Transverse colon (tissue), 4 donors: ENCODE measurements at regions of chr6 and their contacts with region 1.

Region 1: DNA sequence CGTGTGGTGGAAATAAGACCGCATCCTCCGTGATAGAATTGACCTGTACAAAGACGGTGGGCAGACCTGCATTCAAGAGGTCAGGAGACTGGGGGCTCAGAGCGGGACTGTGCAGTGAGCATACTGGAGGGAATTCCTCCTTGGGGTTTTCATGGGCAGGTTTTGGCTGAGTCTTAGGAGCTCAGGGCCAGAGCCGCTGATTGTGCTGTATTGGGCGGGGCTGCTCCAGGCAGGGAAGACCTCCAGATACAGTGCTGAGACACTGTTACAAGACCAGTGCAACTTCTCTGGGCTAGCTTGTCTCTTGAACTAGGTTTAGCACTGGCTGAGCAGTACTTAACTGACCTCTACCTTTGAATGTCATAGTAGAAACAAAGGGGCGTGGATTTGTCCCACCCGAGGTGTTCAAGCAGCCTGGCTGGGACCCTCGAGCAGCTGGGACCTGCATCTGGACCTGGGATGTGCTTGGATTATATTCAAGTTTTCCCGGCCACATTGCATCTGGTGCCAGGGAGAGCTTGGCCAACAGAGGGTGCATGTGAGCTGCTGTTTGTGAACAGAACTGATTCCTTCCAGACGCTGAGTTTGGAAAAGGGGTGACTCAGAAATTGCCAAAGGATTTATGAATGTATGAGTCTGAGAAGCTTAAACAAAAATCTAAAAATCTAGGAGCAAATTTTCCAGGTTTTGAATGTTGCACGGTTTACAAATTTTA is 33.4 kb upstream of the SLC22A1 start:
- DNase-seq: peak; percentile 74
- H3K4me3 ChIP-seq: no peak overlapping the region
- H3K27ac ChIP-seq: peak overlapping the region in 3 of 4 donors; percentile 60 to 82 (median 75)
- H3K4me1 ChIP-seq: peaks cover 6 to 29% (median 20%) of the 10 kb centered on the region in 4 donors
- H3K27me3 ChIP-seq: no peaks in the 10 kb centered on the region
- CTCF ChIP-seq: peak; percentile 64 to 79 (median 74)
- EP300 ChIP-seq: no peak
- POLR2A ChIP-seq: no peak

Region 2: GRCh38 chr6:160041608-160042007 is 46.6 kb before region 1 on chr6:
- in situ Hi-C with region 1: no loop called
- intact Hi-C with region 1: loop called (anchors 1 kb)
- DNase-seq: no peak
- H3K4me3 ChIP-seq: no peak overlapping the region
- H3K27ac ChIP-seq: no peak overlapping the region
- H3K4me1 ChIP-seq: no peaks in the 10 kb centered on the region
- H3K27me3 ChIP-seq: no peaks in the 10 kb centered on the region
- CTCF ChIP-seq: no peak
- EP300 ChIP-seq: no peak
- POLR2A ChIP-seq: no peak